Endothelial cell of umbilical vein (primary cell): ENCODE measurements at regions of chr20 and their contacts with region 1.

Region 1: GRCh38 chr20:58246346-58246745 is 17.9 kb upstream of the ANKRD60 start:
- DNase-seq: peak; percentile 15
- H3K4me3 ChIP-seq: no peak overlapping the region
- H3K27ac ChIP-seq: no peak overlapping the region
- H3K4me1 ChIP-seq: no peaks in the 10 kb centered on the region
- H3K27me3 ChIP-seq: no peaks in the 10 kb centered on the region
- CTCF ChIP-seq: peak; percentile 11 to 18
- POLR2A ChIP-seq: no peak

Region 2: DNA sequence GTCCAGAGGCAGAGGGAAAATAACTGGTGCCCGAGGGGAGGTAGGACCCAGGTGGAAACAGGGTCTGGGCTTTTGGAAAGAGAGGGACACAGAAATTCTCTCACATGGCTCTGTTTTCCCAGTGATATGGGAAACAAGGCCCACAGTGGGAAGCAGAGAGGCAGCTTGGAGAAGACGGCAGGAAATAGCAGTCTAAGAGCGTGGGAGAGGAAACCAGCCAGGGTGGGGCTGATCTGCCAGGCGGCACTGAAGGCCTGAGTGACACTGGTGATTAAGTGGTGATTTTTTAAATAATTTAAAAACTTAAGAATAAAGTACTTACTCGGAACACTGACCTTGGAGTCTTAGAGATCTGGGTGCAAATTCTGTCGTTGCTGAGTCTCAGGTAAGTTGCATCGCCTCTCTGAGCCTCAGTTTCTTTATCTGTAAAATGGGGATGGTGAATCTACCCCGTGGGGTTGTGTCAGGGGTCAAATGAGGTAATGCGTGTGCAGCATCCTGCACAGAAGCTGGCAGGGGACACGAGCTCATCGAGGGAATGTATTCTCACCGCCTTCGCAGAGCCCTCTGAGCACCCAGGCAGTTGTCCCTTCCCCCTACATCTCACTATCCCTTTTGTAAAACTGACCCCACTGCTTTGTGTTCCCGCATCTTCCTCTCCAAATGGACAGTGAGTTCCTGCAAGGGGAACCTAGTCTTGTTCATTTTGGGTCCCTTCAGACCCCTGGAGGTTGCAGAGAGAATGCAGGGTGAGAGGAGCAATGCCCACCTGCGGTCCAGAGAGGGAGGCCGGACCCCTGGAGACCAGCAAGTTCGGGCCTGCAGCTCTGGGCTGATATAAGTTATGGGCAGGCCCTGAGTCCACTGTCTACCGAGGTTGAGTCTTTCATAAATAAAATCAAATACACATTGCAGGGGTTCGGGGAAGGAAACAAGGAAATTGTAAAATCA is 307.9 kb before region 1 on chr20:
- CTCF ChIA-PET with region 1: no interaction called
- POLR2A ChIA-PET with region 1: no interaction called
- dilution Hi-C with region 1: no loop called
- intact Hi-C with region 1: no loop called
- DNase-seq: peak; percentile 25
- H3K4me3 ChIP-seq: no peak overlapping the region
- H3K27ac ChIP-seq: no peak overlapping the region
- H3K4me1 ChIP-seq: no peaks in the 10 kb centered on the region
- H3K27me3 ChIP-seq: no peaks in the 10 kb centered on the region
- CTCF ChIP-seq: no peak
- POLR2A ChIP-seq: no peak

Region 3: DNA sequence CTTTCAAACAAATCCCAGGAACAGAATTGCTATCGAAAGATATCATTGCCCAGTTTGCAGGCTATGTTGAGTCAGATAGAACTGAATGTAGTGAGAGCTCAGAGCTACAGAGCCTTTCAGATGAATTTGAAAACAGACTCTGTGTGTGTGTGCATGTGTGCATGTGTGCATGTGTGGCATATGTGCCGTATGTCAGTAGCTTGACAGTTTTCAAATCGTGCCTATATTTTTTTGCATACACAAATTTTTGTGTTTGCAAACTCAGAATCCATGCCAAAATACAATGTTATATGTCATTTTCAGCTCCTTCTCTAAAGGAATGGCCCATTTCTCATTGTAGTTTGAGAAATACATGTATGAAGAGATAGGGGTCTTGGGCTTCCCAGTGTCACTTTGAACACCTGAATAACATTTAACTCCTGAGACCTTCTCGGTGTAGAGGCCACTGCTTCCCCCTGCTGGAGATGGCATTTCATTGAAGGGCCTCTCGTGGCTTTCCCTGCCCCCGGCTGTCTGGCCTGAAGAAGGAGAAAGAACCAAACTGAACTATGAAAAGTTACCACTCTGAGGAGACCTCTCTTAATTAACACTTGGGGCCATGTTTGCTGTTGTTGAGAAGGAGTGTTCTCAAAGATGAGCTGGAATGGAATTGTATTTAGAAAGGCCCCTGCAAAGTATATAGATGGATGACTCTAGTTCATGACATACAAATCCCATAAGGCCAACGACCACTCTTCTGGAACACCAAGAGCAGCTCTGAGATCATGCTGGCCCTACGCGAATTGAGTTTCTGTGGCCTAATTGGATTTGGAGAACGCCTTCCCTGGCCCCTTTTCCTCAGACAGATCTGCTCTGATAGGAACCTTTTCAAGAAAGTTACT is 201.4 kb after region 1 on chr20:
- CTCF ChIA-PET with region 1: interaction called, 21 read pairs
- POLR2A ChIA-PET with region 1: no interaction called
- dilution Hi-C with region 1: loop called (anchors 25 kb)
- intact Hi-C with region 1: no loop called
- DNase-seq: peak; percentile 66
- H3K4me3 ChIP-seq: no peak overlapping the region
- H3K27ac ChIP-seq: no peak overlapping the region
- H3K4me1 ChIP-seq: no peaks in the 10 kb centered on the region
- H3K27me3 ChIP-seq: no peaks in the 10 kb centered on the region
- CTCF ChIP-seq: peak; percentile 68 to 73
- POLR2A ChIP-seq: no peak